PC-3 (cell line): ENCODE measurements at regions of chr17 and their contacts with region 1.

Region 1: DNA sequence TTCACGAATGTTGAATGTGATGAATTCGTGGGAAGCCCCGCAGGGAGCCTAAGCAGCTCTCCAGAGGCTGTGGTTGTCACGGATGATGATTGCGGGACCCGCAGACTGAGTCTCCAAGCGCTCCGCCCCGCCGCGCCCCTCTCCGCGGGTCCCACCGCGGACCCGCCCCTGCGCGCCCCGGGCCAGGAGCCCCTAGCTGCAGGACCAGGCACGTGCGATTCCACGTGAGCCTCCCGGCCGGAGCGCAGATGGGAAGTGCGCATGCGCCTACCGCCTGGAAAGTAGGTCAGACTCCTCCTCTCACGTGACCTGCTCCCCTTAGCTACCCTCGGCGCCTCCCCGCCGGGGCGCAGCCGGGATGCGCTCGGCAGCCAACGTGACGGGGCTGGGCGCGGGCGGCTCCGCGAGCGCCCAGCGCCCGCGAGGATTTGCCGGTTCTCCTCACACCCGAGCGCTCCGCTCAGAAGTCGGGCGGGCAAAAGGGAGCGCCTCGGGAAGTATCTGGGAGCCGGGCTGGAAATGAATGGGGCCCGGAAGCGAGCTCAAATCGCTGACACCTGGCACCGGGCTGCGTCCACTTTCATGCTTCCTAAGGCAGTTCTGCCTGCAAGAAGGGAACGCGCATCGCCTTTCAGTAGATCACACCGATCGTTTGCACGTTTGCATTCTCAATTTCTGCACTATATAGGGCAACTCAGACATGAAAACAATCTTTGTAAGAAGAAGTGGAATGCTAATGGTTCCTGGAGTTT is 26.4 kb upstream of the HLF start:
- DNase-seq: peak; percentile 85
- ATAC-seq: peak; percentile 85
- H3K4me3 ChIP-seq: peak overlapping the region; percentile 64
- H3K27ac ChIP-seq: no peak overlapping the region
- H3K4me1 ChIP-seq: peaks cover 23% of the 10 kb centered on the region
- H3K27me3 ChIP-seq: peaks cover 3% of the 10 kb centered on the region; the same call in 1 of the 2 replicates
- CTCF ChIP-seq: no peak

Region 2: DNA sequence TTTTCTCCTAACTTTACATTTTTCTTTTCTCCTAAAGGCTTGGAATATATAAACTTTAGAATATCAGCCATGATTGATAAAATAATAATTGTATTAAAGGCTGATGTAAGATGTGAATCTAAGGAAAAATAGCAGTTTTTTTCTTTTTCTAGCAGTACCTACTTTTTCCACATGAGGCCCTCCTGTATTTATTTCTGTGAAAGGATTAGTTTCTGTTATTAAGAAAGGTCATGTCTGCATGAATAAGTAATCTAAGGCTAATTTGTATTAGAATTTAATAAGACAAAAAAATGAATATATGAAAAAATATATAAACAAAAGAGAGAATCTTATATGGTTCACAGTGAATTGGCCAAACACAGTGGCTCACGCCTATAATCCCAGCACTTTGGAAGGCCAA is 184.5 kb before region 1 on chr17:
- CTCF ChIA-PET with region 1: no interaction called
- POLR2A ChIA-PET with region 1: no interaction called
- intact Hi-C with region 1: loop called (anchors 2 kb)
- DNase-seq: peak; percentile 39
- ATAC-seq: no peak
- H3K4me3 ChIP-seq: no peak overlapping the region
- H3K27ac ChIP-seq: no peak overlapping the region
- H3K4me1 ChIP-seq: peaks cover 16% of the 10 kb centered on the region
- H3K27me3 ChIP-seq: no peaks in the 10 kb centered on the region
- CTCF ChIP-seq: peak; percentile 75

Region 3: DNA sequence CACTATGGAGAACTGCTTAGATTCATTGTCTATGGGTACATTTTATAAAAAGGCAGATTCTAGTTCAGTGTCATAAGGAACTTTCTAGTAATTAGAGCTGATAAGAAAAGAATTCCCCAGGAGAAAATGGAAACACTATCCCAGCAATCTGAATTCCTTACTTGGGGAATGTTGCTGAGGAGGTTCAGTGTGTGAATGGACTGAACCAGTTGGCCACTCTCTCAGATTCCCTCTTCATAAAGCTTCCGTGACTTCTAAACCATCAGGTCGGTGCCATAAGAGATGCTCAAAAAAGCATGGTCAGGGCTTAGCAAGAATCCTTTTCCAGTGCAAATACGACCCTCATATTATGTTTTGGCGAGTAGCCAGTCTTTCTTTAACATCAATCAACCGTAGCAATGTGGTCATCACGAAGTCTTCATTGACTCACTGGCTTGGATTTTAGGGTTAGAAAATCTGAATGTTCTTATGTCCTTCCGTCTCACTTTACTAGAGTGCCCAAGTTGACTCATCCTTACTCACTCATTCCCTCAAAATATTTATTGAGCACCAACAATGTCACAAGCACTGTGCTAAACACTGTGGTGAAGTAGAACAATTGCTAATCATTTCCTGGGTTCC is 76.3 kb before region 1 on chr17:
- CTCF ChIA-PET with region 1: no interaction called
- POLR2A ChIA-PET with region 1: no interaction called
- intact Hi-C with region 1: loop called (anchors 2 kb)
- DNase-seq: peak; percentile 99
- ATAC-seq: peak; percentile 85
- H3K4me3 ChIP-seq: no peak overlapping the region
- H3K27ac ChIP-seq: peak overlapping the region; percentile 79
- H3K4me1 ChIP-seq: peaks cover 56% of the 10 kb centered on the region
- H3K27me3 ChIP-seq: no peaks in the 10 kb centered on the region
- CTCF ChIP-seq: no peak

Region 4: DNA sequence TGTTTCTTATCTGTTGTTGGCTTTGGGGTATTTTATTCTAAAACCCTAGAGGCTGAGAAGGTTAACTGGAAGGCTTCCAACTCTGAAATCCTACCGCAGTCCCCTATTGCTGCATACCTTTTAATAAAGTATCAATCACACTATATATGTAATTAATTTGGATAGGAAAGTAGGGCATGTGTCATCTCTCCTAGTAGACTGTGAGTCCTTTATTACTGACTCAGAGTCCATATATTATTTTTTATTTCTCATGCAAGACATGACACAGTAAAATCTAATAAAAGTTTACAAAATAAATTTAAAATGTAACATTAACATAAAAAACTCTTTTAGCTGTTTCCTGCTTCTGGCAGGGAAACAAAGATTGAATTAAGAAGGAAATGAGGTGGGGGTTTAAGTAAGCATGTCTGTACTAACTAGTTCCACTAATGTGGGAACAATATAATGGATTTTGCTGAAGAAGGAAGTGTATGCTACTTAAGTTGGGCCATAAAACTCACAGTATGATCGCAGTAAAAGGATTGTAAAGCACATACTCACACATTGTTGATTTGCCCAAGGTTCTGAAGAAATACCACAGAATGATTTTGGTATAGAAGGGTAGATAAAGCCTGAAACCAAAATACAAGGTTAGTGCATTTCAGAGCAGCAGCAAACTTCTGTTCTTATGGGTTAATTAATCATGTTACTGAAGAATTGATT is 71.2 kb before region 1 on chr17:
- CTCF ChIA-PET with region 1: no interaction called
- POLR2A ChIA-PET with region 1: no interaction called
- intact Hi-C with region 1: loop called (anchors 2 kb)
- DNase-seq: peak; percentile 34
- ATAC-seq: peak; percentile 84
- H3K4me3 ChIP-seq: no peak overlapping the region
- H3K27ac ChIP-seq: peak overlapping the region; percentile 42
- H3K4me1 ChIP-seq: peaks cover 26% of the 10 kb centered on the region
- H3K27me3 ChIP-seq: no peaks in the 10 kb centered on the region
- CTCF ChIP-seq: no peak

Region 5: GRCh38 chr17:55264645-55265298 is 26.4 kb after region 1 on chr17 and contains the start of gene HLF:
- CTCF ChIA-PET with region 1: no interaction called
- POLR2A ChIA-PET with region 1: no interaction called
- intact Hi-C with region 1: loop called (anchors 1 kb)
- DNase-seq: peak; percentile 70
- ATAC-seq: peak; percentile 64
- H3K4me3 ChIP-seq: peak within 1 kb of the TSS; percentile 41; the same call in 1 of the 2 replicates
- H3K27ac ChIP-seq: no peak within 1 kb of the TSS
- H3K4me1 ChIP-seq: no peaks in the 10 kb centered on the region; the same call in 1 of the 2 replicates
- H3K27me3 ChIP-seq: peaks cover 23% of the 10 kb centered on the region
- CTCF ChIP-seq: no peak
- total RNA-seq, gene HLF: 0.23 and 0.66 TPM in 2 replicates

Region 6: DNA sequence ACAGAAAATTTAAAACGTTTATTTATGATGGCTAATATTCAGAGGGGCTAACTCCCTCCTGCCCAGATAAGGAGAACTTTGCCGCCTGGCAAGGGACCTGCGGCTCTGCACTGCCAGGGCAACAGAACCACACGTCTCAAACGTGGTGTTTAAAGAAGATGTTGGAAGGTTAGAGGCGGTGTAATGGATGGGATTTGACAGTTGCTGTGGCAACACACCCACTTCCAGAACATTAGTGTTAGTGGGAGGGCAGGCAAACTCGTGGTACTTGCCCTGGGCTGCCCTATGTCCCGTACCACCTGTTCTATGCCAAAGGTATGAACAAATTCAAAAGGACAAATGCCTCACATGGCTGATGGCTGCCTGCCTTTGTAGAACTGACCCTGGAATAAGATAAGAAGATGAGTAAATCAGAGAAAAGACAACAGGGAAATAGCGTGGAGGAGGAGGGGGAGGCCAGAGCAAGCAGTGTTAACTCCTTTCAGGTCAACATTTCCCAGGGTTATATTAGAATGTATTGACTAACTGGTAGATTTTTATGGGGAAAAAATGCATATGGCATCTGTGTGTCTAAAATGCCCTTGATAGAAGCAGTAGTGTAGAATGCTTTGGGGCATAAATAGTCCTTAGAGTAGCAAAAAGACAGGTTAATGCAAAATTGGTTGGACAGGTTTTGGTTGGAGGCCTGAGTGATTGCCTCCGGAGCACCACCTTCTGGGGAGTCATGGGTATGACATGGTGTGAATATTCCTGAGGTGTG is 57.2 kb after region 1 on chr17:
- CTCF ChIA-PET with region 1: no interaction called
- POLR2A ChIA-PET with region 1: no interaction called
- intact Hi-C with region 1: loop called (anchors 1 kb)
- DNase-seq: peak; percentile 79
- ATAC-seq: peak; percentile 93
- H3K4me3 ChIP-seq: no peak overlapping the region
- H3K27ac ChIP-seq: no peak overlapping the region
- H3K4me1 ChIP-seq: no peaks in the 10 kb centered on the region
- H3K27me3 ChIP-seq: no peaks in the 10 kb centered on the region
- CTCF ChIP-seq: peak; percentile 94

Region 7: DNA sequence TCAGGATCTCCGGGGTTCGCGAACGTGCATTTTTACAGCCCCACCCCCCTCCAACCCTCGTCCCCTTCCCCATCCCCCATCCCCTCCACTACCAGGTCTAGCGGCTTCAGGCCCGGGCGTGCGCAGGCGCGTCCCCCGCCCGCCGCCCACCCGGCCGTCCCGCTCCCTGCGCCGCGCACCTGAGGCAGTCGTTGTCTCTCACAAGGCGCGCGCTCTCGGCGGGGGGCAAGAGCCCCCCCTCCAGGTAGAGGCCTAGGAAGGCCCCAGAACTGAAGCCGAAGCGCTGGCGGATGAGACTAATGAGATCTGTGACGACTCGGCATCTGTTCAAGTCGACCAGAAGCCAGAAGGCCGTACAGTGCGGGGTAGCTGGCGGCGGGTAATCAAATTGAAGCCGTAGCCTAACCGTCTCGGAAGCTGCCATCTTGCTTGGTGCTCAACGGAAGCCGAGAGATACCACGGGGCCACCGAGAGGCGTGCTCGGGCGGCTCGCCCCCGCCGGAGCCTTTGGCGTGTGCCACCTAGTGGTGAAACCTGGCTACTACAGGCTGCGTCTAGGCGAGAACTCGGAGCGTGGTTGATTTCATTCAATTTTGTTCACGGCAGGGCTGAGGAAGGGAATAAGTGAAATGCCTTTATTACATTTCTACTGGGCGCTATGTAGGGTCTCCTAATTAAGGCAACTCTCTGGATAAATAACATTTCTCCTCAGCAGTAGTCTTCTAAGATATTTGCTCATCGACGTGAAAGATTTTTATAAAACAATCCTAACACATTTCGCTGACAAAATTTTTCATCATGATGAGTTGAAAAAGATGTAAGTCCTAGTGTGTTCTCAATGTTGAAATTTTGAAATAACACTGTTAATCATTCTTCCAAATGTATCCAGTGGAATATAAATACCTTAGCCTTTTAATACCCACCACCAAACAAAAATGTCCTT is 1722.5 kb after region 1 on chr17 and contains the start of gene COIL:
- CTCF ChIA-PET with region 1: no interaction called
- POLR2A ChIA-PET with region 1: interaction called, 14 read pairs
- intact Hi-C with region 1: no loop called
- DNase-seq: peak; percentile 98
- ATAC-seq: peak; percentile 94
- H3K4me3 ChIP-seq: peak within 1 kb of the TSS; percentile 98
- H3K27ac ChIP-seq: peak within 1 kb of the TSS; percentile 83
- H3K4me1 ChIP-seq: peaks cover 24% of the 10 kb centered on the region
- H3K27me3 ChIP-seq: no peaks in the 10 kb centered on the region
- CTCF ChIP-seq: peak; percentile 99
- total RNA-seq, gene COIL: 22.3 and 22.9 TPM in 2 replicates